Gastrocnemius medialis (tissue), 4 donors: ENCODE measurements at regions of chr3 and their contacts with region 1.

Region 1: DNA sequence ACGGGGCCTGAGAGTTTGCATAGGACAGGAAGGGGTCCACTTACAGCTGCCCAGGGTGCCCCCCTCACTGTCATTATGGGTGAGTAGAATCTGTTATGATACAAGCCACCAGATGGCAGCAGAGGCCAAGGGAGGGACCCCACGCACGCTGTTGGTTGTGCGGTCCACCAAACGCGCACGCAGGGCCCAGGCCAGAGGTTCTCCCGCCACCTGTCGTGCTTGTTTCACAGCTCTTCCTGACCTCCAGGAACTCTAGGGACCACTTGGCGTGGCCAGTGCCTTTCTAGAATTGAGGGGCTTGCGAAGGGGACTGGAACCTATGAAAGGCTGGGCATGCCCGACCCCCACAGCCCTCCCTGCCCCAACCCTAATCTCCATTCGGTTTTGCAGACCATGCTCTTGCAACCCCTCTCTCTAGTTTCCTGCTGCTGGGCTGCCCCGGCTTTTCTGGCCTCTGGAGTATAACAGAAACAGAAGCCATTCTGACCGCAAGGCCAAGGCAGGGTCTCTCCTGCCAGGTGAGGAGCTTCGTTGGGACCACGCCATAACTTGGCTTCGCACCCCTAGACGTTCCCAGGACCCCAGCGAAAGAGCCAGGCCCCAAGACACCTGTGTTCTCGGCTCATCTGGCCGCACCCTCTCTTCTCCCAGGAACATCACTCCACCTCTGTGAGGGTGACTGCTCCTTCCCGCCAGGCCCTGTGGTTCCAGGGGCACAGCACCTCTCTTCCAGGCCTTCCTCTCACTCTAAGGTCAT is 46.0 kb downstream of the ALDH1L1 start:
- DNase-seq: peak; percentile 25 to 73
- ATAC-seq: peak; percentile 80 to 93
- H3K4me3 ChIP-seq: no peak overlapping the region
- H3K27ac ChIP-seq: peak overlapping the region in 2 of 4 donors; percentile 12 to 14
- H3K4me1 ChIP-seq: no peaks in the 10 kb centered on the region
- H3K27me3 ChIP-seq: no peaks in the 10 kb centered on the region
- CTCF ChIP-seq: peak; percentile 87 to 96 (median 91)
- POLR2A ChIP-seq: no peak

Region 2: DNA sequence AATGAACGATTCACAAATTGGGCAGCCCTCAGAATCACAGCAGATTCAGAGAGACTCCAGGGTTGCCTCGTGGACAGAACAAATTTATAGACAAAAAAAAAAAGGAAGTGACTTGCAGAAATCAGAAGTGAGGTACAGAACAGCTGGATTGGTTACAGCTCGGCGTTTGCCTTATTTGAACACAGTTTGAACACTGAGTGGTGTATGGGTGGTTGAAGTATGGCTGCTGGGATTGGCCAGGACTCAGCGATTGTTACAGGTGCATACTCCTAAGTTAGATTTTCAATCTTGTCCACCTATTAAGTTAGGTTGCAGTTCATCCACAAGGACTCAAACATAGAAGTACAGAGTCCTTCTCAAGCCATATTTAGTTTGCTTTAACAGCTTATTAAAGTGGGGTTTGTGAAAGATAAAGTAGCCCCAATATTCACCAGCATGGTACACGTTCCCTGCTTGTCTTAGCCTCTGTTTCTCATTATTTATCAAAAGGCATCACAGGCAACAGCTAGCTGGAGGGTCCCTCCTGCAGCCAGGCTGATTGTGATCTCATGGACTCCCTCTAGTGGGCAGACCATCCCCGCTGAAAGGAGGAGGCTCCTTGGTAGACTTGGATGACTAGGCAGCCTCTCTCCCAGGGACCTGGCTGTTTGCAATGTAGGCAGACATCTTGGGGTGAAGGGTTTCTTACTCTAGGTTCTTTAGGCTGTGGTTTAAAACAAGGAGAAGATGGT is 63.6 kb after region 1 on chr3:
- in situ Hi-C with region 1: loop called in 1 of 4 experiments (anchors 5 kb)
- intact Hi-C with region 1: loop called (anchors 1 kb)
- DNase-seq: peak; percentile 68 to 82
- ATAC-seq: peak; percentile 97 to 100
- H3K4me3 ChIP-seq: peak overlapping the region in 1 of 4 donors; percentile 15
- H3K27ac ChIP-seq: peak overlapping the region; percentile 27 to 65 (median 44)
- H3K4me1 ChIP-seq: peaks cover 0 to 8% of the 10 kb centered on the region in 2 donors
- H3K27me3 ChIP-seq: no peaks in the 10 kb centered on the region
- CTCF ChIP-seq: peak; percentile 75 to 86 (median 80)
- POLR2A ChIP-seq: no peak

Region 3: DNA sequence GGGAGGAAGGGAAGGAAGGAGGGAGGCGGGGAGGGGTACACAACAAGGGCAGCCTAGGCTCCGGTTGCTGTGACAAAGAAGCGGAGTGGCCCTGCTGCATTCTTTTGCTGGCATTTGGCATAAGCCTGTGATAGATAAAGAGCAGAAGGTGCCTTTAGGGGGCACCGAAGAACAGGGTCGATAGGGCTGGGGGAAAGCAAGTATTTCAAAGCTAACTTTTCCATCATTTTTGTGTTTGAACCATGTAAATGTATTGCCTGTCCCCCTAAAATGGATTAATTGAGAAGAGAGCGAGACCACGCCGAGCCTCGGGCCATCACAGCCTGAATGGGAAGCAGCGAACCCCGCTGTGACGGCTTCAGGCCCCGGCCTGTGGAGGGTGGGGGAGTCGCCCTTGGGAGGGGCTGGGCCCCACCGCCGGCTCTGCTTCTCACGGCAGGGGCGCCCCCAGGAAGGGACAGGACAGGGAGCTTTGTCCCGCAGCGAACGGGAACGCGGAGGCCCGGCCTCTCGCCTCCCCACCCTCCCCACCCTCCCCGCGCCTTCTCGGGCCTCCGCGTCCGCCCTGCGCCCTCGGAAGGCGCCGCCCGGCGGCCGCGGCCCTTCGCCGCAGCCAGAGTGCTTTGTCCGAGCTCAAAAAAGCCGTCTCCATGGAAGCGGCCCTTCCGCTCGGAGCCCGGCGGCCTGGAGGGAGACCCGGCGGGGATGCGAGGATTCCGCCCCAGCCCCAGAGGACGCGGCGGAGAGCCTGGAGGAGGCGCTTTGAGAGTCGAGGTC is 78.4 kb after region 1 on chr3:
- in situ Hi-C with region 1: no loop called
- intact Hi-C with region 1: loop called (anchors 1 kb)
- DNase-seq: peak in 1 of 2 donors; percentile 36
- ATAC-seq: peak; percentile 78 to 79
- H3K4me3 ChIP-seq: peak overlapping the region; percentile 54 to 84 (median 62)
- H3K27ac ChIP-seq: peak overlapping the region; percentile 8 to 60 (median 36)
- H3K4me1 ChIP-seq: peaks cover 16 to 19% of the 10 kb centered on the region in 2 donors
- H3K27me3 ChIP-seq: peaks cover 0 to 11% (median 0%) of the 10 kb centered on the region in 3 donors
- CTCF ChIP-seq: peak in 4 of 5 experiments; percentile 43 to 71 (median 48)
- POLR2A ChIP-seq: no peak

Region 4: GRCh38 chr3:126245811-126246727 is 111.7 kb after region 1 on chr3:
- in situ Hi-C with region 1: no loop called
- intact Hi-C with region 1: loop called (anchors 5 kb)
- DNase-seq: peak; percentile 53 to 69
- ATAC-seq: peak; percentile 93 to 95
- H3K4me3 ChIP-seq: no peak overlapping the region
- H3K27ac ChIP-seq: peak overlapping the region in 3 of 4 donors; percentile 4 to 46 (median 19)
- H3K4me1 ChIP-seq: peaks cover 0 to 4% of the 10 kb centered on the region in 2 donors
- H3K27me3 ChIP-seq: no peaks in the 10 kb centered on the region
- CTCF ChIP-seq: peak in 4 of 5 experiments; percentile 41 to 63 (median 53)
- POLR2A ChIP-seq: no peak